Ascending aorta (tissue), 2 donors: ENCODE measurements at regions of chr15 and their contacts with region 1.

Region 1: DNA sequence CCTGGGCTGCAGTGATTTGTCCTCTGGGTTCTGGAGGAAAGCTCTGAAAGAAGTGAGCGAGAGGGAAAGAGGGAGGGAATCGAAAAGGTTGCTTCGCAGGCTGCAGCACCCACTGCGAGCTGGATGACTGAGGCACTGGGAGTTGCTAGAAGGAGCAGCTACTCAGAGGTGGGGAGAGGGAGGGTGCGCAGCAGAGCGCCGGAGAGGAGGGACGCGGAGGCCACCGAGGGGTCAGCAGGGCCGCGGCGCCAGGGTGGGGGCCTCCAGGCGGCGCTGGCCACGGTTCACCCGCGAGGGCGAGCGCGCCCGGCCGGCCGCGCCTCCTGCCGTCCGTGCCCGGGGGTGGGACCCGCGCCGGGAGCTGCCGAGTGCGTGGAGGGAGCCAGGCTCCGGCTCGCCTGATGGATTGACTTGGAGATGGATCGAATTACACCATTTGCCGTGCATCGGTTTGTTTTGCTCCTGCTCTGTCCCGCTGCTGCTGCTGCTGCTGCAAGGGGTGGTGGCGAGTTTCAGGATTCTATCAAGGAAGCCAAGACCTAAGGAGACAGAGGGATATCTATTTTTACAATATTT is at the start of gene SEMA6D:
- DNase-seq: peak in 1 of 2 donors; percentile 88
- H3K4me3 ChIP-seq: peak within 1 kb of the TSS; percentile 77 to 95
- H3K27ac ChIP-seq: peak within 1 kb of the TSS; percentile 88 to 94
- H3K4me1 ChIP-seq: peaks cover 6 to 20% of the 10 kb centered on the region in 2 donors
- H3K27me3 ChIP-seq: no peaks in the 10 kb centered on the region
- CTCF ChIP-seq: peak in 2 of 3 experiments; percentile 31 to 57
- total RNA-seq, gene SEMA6D: 4.0 TPM

Region 2: GRCh38 chr15:47431501-47431900 is 285.6 kb before region 1 on chr15:
- intact Hi-C with region 1: no loop called
- DNase-seq: no peak
- H3K4me3 ChIP-seq: no peak overlapping the region
- H3K27ac ChIP-seq: no peak overlapping the region
- H3K4me1 ChIP-seq: peaks cover 0 to 3% of the 10 kb centered on the region in 2 donors
- H3K27me3 ChIP-seq: no peaks in the 10 kb centered on the region
- CTCF ChIP-seq: no peak

Region 3: GRCh38 chr15:47473832-47474231 is 243.3 kb before region 1 on chr15:
- intact Hi-C with region 1: loop called (anchors 2 kb)
- DNase-seq: peak; percentile 16 to 87
- H3K4me3 ChIP-seq: peak overlapping the region in 1 of 2 donors; percentile 11
- H3K27ac ChIP-seq: peak overlapping the region; percentile 66 to 72
- H3K4me1 ChIP-seq: peaks cover 5 to 22% of the 10 kb centered on the region in 2 donors
- H3K27me3 ChIP-seq: no peaks in the 10 kb centered on the region
- CTCF ChIP-seq: no peak

Region 4: GRCh38 chr15:48062148-48062861 is 345.2 kb after region 1 on chr15:
- intact Hi-C with region 1: loop called (anchors 5 kb)
- DNase-seq: no peak
- H3K4me3 ChIP-seq: no peak overlapping the region
- H3K27ac ChIP-seq: no peak overlapping the region
- H3K4me1 ChIP-seq: peaks cover 4 to 16% of the 10 kb centered on the region in 2 donors
- H3K27me3 ChIP-seq: no peaks in the 10 kb centered on the region
- CTCF ChIP-seq: no peak

Region 5: GRCh38 chr15:48221885-48222284 is 504.8 kb after region 1 on chr15:
- intact Hi-C with region 1: loop called (anchors 5 kb)
- DNase-seq: peak in 1 of 2 donors; percentile 88
- H3K4me3 ChIP-seq: peak overlapping the region in 1 of 2 donors; percentile 35
- H3K27ac ChIP-seq: peak overlapping the region; percentile 79 to 87
- H3K4me1 ChIP-seq: peaks cover 3 to 40% of the 10 kb centered on the region in 2 donors
- H3K27me3 ChIP-seq: no peaks in the 10 kb centered on the region
- CTCF ChIP-seq: no peak

Region 6: GRCh38 chr15:48330855-48331795 is 614.0 kb after region 1 on chr15 and contains the start of gene DUT:
- intact Hi-C with region 1: loop called (anchors 2 kb)
- DNase-seq: peak; percentile 27 to 91
- H3K4me3 ChIP-seq: peak within 1 kb of the TSS; percentile 70 to 89
- H3K27ac ChIP-seq: peak within 1 kb of the TSS; percentile 92 to 98
- H3K4me1 ChIP-seq: peaks cover 4 to 12% of the 10 kb centered on the region in 2 donors
- H3K27me3 ChIP-seq: no peaks in the 10 kb centered on the region
- CTCF ChIP-seq: no peak
- total RNA-seq, gene DUT: 150 TPM